ENCODE measurements at regions of chr1 and their contacts with region 1.

Region 1: GRCh38 chr1:156500797-156501499 is 373 bp upstream of the MEF2D start:
- DNase-seq: peak; percentile 89
- H3K4me3 Mint-ChIP-seq: peak overlapping the region; percentile 86
- H3K27ac Mint-ChIP-seq: peak overlapping the region; percentile 90
- H3K4me1 Mint-ChIP-seq: peaks cover 62% of the 10 kb centered on the region
- H3K27me3 Mint-ChIP-seq: no peaks in the 10 kb centered on the region

Region 2: DNA sequence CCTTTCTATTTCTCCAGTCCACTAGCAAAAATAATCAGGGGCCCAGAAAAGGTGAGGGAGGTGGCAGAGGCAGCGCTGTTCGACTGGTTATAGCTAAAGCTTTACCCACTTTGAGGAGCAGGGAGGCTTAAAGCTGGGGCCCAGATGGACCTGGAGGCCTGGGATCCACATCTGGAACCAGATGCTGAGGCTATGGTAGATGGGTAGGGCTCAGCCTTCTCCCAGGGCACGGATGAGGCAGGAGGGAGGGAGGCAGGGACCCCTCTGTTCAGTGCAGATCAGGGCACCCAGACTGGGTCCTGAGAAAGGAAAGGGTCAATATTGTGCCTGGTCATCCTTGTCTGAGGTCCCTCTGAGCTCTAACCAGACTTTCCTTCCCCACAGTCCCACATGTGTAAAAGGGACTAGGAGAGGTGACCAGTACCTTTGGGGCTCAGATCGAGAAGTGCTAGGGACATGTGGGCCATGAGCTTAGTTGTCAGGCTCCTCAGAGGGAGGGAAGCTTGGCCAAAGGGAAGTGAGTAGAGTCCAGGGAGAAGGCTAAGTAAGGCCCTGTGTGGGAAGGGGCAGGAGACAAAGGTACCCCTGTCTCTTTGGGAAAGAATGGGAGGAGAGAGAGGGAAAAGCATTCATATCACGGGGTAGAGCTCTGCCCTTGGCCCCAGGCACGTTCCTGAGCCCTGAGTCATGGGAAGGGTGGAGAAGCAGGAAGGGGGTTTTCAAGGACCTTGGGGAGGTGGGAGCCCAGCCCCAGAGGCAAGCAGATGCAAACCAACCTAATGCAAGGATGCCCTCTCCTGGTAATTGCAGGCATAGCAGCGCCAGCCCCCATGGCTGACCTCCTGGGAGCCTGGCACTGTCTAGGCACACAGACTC is 371.0 kb before region 1 on chr1:
- intact Hi-C with region 1: loop called (anchors 10 kb)
- DNase-seq: peak; percentile 63
- H3K4me3 Mint-ChIP-seq: no peak overlapping the region
- H3K27ac Mint-ChIP-seq: peak overlapping the region; percentile 33
- H3K4me1 Mint-ChIP-seq: peaks cover 47% of the 10 kb centered on the region
- H3K27me3 Mint-ChIP-seq: no peaks in the 10 kb centered on the region

Region 3: DNA sequence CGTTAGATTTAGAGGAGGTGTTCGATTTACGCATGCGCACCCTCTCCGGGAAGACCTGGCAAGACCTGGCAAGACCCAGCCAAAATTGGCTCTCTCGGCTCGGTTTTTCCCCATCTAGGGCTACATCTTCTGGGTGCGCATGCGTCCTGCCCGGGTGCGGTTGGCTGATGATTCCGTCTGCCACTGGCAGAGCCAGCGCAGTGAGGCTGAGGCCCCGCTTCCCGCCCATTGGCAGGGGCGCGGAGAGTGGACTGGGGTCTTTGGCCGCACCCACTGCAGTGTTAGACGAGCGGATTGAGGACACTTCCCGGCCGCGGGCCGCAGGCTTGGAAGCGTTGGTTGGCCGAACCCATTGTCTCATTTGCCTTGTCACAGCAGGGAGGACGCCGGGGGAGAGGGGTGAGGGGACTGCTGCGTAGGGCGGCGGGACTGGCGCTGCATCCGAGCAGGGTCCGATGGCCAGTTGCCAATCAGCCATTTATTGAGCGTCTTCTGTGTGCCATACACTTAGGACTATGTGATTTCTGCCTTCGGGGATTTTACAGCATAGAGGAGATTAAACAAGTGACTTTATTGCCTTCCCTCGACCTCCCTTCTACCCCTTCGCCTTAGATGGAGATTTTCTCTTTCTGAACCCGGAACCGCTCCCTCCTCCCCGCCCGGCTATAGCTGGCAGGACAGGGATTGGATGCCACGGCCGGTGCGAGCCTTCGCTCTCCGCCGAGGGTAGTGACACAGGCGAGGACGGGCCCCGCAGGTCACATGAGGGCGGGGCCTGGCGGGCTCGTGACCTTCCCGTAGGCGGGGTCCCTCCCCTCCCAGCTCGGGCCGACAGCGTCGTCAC is 44.1 kb before region 1 on chr1:
- intact Hi-C with region 1: loop called (anchors 1 kb)
- DNase-seq: peak; percentile 92
- H3K4me3 Mint-ChIP-seq: peak overlapping the region; percentile 84
- H3K27ac Mint-ChIP-seq: peak overlapping the region; percentile 97
- H3K4me1 Mint-ChIP-seq: peaks cover 21% of the 10 kb centered on the region
- H3K27me3 Mint-ChIP-seq: peaks cover 13% of the 10 kb centered on the region

Region 4: DNA sequence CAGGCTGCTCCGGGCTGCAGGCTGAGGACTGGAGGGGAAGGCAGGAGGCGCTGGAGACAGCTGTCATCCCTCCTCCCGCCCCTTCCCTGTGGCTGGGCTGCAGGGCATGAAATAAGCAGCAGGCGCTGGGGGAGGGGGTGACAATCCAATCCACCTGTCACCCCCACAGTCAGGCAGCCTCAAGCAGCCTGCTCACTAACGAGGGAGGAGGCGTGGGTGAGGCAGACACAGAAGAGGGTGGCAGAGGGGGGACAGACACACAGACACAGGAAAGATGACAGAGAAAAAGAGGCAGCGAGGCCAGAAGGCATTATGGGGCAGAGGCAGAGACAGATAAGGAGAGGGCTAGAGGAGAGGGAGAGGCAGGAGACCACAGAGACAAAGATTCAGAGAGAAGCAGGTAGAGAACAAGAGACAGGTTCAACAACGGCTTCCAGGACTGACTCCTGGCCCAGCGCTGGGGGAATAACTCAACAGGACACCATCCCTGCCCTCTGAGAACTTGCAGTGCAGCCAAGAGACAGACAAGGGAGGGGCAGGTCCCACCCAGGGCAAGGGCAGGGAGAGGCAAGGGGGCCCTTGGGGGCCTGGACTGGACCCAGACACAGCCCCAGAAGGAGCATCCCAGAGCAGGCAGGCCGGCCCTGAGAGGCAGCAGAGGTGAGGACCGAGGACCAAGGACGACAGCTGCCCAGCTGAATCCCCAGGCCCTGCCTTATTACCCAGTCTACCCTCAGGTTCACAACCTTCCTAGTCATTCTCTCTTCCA is 11.6 kb before region 1 on chr1:
- intact Hi-C with region 1: loop called (anchors 1 kb)
- DNase-seq: no peak
- H3K4me3 Mint-ChIP-seq: peak overlapping the region; percentile 30
- H3K27ac Mint-ChIP-seq: peak overlapping the region; percentile 6
- H3K4me1 Mint-ChIP-seq: peaks cover 65% of the 10 kb centered on the region
- H3K27me3 Mint-ChIP-seq: no peaks in the 10 kb centered on the region

Region 5: GRCh38 chr1:156511644-156512043 is 10.7 kb after region 1 on chr1:
- intact Hi-C with region 1: no loop called
- DNase-seq: no peak
- H3K4me3 Mint-ChIP-seq: peak overlapping the region; percentile 33
- H3K27ac Mint-ChIP-seq: peak overlapping the region; percentile 82
- H3K4me1 Mint-ChIP-seq: peaks cover 38% of the 10 kb centered on the region
- H3K27me3 Mint-ChIP-seq: peaks cover 2% of the 10 kb centered on the region

Region 6: DNA sequence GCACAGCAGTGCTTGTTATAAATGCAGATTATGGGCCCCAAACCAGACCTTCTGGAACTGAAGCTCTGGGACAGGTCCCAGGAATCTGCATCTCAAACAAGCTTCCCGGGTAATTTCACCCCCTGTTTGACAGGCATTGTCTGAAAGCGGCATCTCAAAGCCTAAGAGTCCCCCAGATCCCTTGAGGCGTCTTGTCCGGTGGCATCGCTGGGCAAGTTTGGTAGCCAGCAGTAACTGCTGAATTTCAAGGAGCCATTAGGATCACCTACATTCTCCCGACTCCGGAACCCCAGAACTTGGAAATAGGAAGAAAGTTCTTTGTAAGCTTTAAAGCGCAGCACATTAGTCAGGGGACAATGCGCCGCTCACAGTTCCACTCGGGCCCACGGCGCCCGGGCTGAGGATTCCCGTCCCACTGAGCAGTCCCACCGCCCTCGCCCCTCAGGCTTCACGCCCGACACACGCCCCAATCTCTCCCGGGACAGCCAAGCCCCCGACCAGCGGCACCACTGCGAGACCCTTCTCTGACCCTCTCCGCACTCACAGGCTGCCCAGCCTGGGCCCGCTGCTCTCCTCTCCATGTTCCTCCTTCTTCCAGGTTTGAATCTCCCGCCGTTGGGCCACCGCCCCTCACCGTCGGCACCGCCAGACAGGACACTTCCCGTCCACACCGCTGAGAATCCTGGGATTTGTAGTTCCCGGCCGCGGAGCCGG is 71.2 kb after region 1 on chr1 and contains the start of gene IQGAP3:
- intact Hi-C with region 1: loop called (anchors 5 kb)
- DNase-seq: peak; percentile 69
- H3K4me3 Mint-ChIP-seq: peak within 1 kb of the TSS; percentile 95
- H3K27ac Mint-ChIP-seq: peak within 1 kb of the TSS; percentile 87
- H3K4me1 Mint-ChIP-seq: peaks cover 24% of the 10 kb centered on the region
- H3K27me3 Mint-ChIP-seq: peaks cover 19% of the 10 kb centered on the region
- total RNA-seq, gene IQGAP3: 16.1 and 16.8 TPM in 2 replicates

Region 7: GRCh38 chr1:156751758-156752757 is 251.1 kb after region 1 on chr1:
- intact Hi-C with region 1: loop called (anchors 5 kb)
- DNase-seq: peak; percentile 93
- H3K4me3 Mint-ChIP-seq: peak overlapping the region; percentile 97
- H3K27ac Mint-ChIP-seq: peak overlapping the region; percentile 92
- H3K4me1 Mint-ChIP-seq: peaks cover 32% of the 10 kb centered on the region
- H3K27me3 Mint-ChIP-seq: no peaks in the 10 kb centered on the region

Measured in activated T-helper 2 cell treated with anti-CD3 and anti-CD28 coated beads, Interferon-gamma antibody, Interleukin-2, Interleukin-4, amounts not matched to agents 10 μg/mL and 5 μg/mL and 100 μg/mL, durations not matched to agents 14 hours and 24 hours and 36 hours (primary cell).